ENCODE measurements at regions of chr15 and their contacts with region 1.

Region 1: DNA sequence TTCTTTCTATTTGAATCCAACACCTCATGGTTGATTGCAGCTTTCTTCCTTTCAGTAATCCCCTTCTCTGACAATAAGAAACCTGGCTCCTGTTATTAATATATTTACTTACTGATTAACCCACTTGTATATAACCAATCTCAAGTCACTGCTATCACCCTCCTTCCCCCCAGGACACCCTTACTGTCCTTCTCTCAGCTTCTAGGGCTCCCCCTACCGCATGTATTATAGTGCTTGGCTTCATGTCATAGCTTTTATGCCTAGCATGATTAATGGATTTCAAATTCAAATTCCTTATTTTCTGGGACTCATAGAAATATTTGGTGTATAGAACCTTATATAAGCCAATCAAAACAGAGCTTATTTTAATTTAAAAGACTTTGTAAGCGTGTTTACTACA is 75.7 kb upstream of the BNIP2 start:
- DNase-seq: no peak
- ATAC-seq: no peak
- H3K4me3 ChIP-seq: no peak overlapping the region
- H3K27ac ChIP-seq: no peak overlapping the region
- H3K4me1 ChIP-seq: no peaks in the 10 kb centered on the region
- H3K27me3 ChIP-seq: no peaks in the 10 kb centered on the region
- CTCF ChIP-seq: 0 out of 2 replicates have a peak, but pooled peaks have one; percentile 22
- EP300 ChIP-seq: no peak
- POLR2A ChIP-seq: no peak
- RAD21 ChIP-seq: no peak

Region 2: DNA sequence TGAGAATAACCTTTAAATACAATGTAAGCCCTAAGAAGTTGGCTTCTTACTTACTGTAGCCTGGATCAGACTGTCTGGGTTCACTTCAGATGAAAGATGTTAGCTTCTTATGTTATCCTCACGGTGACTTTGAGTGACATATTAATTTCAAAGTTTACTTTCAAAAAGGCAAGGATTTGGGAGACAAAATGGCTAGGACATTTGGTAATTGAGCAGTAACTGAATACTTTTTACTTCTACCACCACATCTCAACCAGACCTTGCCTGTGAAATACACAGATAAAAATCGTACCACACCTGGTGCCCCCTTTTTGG is 39.6 kb before region 1 on chr15:
- CTCF ChIA-PET with region 1: interaction called, 6 read pairs
- POLR2A ChIA-PET with region 1: no interaction called
- in situ Hi-C with region 1: no loop called
- intact Hi-C with region 1: loop called (anchors 2 kb)
- DNase-seq: no peak
- ATAC-seq: no peak
- H3K4me3 ChIP-seq: no peak overlapping the region
- H3K27ac ChIP-seq: no peak overlapping the region
- H3K4me1 ChIP-seq: no peaks in the 10 kb centered on the region
- H3K27me3 ChIP-seq: peaks cover 0 to 29% of the 10 kb centered on the region in 2 experiments; a peak in 3 of 5 replicates
- CTCF ChIP-seq: no peak
- EP300 ChIP-seq: no peak
- POLR2A ChIP-seq: no peak
- RAD21 ChIP-seq: no peak

Region 3: DNA sequence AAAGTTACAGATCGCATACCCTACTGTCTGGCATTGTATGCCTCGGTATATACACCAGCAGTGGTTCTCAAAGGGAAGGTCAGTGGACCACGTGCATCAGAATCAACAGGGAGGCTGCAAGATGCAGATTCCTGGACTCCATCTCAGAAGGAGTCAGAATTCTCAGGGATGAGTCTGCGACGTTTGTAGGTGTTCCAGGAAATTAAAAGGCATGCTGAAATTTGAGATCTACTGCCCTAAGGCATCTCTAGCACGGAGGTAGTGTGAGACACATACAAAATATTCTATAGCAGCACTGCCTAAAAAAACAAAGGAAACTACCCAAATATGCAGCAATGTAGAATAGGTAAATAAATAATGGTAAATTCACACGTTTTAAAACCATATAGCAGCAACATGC is 61.1 kb after region 1 on chr15:
- CTCF ChIA-PET with region 1: no interaction called
- POLR2A ChIA-PET with region 1: no interaction called
- in situ Hi-C with region 1: loop called (anchors 10 kb)
- intact Hi-C with region 1: no loop called
- DNase-seq: no peak
- ATAC-seq: no peak
- H3K4me3 ChIP-seq: no peak overlapping the region
- H3K27ac ChIP-seq: no peak overlapping the region
- H3K4me1 ChIP-seq: no peaks in the 10 kb centered on the region
- H3K27me3 ChIP-seq: no peaks in the 10 kb centered on the region; a peak in 1 of 5 replicates
- CTCF ChIP-seq: no peak
- EP300 ChIP-seq: no peak
- POLR2A ChIP-seq: no peak
- RAD21 ChIP-seq: no peak